PC-3 (cell line): ENCODE measurements at regions of chr5 and their contacts with region 1.

Region 1: DNA sequence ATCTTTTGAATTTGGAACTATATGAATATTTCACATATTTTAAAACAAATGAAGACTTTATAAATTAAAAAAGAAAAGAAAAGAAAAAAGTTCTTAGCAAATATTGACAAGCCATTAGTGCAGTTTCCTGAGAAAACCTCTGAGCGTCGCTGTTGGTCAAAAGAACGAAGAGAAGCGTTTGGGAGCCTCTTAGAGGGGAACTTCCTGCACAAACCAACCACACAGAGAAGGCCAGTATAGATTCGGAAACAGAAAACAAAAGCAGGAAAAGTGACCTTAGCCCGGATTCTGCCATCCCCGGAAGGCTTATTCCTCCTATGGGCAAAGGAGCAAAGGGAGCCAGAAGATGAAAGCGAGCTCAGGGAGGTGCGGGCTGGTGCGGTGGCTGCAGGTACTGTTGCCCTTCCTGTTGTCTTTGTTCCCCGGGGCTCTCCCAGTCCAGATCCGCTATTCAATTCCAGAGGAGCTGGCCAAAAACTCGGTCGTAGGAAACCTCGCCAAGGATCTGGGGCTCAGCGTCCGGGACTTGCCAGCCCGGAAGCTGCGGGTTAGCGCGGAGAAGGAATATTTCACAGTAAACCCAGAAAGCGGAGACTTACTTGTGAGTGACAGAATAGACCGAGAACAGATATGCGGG is at the start of gene PCDHGB2:
- DNase-seq: peak; percentile 63
- ATAC-seq: peak; percentile 62
- H3K4me3 ChIP-seq: peak within 1 kb of the TSS; percentile 69
- H3K27ac ChIP-seq: 0 out of 2 replicates have a peak within 1 kb of the TSS, but pooled peaks have one; percentile 23
- H3K4me1 ChIP-seq: 0 out of 2 replicates have a peak, but pooled peaks cover 3% of the 10 kb centered on the region
- H3K27me3 ChIP-seq: no peaks in the 10 kb centered on the region
- CTCF ChIP-seq: peak; percentile 67; the same call in 1 of the 2 replicates
- total RNA-seq, gene PCDHGB2: 1.4 and 2.2 TPM in 2 replicates

Region 2: GRCh38 chr5:141094481-141095262 is 265.2 kb before region 1 on chr5 and contains the start of gene PCDHB2:
- CTCF ChIA-PET with region 1: no interaction called
- POLR2A ChIA-PET with region 1: no interaction called
- intact Hi-C with region 1: loop called (anchors 5 kb)
- DNase-seq: peak; percentile 81
- ATAC-seq: peak; percentile 97
- H3K4me3 ChIP-seq: peak within 1 kb of the TSS; percentile 72
- H3K27ac ChIP-seq: no peak within 1 kb of the TSS
- H3K4me1 ChIP-seq: no peaks in the 10 kb centered on the region
- H3K27me3 ChIP-seq: no peaks in the 10 kb centered on the region
- CTCF ChIP-seq: peak; percentile 73
- total RNA-seq, gene PCDHB2: 13.8 and 15.0 TPM in 2 replicates

Region 3: GRCh38 chr5:141402553-141403260 is 42.8 kb after region 1 on chr5 and contains the start of gene PCDHGA9:
- CTCF ChIA-PET with region 1: no interaction called
- POLR2A ChIA-PET with region 1: no interaction called
- intact Hi-C with region 1: loop called (anchors 2 kb)
- DNase-seq: no peak
- ATAC-seq: no peak
- H3K4me3 ChIP-seq: no peak within 1 kb of the TSS
- H3K27ac ChIP-seq: no peak within 1 kb of the TSS
- H3K4me1 ChIP-seq: no peaks in the 10 kb centered on the region
- H3K27me3 ChIP-seq: no peaks in the 10 kb centered on the region
- CTCF ChIP-seq: no peak
- total RNA-seq, gene PCDHGA9: 1.9 and 2.9 TPM in 2 replicates

Region 4: DNA sequence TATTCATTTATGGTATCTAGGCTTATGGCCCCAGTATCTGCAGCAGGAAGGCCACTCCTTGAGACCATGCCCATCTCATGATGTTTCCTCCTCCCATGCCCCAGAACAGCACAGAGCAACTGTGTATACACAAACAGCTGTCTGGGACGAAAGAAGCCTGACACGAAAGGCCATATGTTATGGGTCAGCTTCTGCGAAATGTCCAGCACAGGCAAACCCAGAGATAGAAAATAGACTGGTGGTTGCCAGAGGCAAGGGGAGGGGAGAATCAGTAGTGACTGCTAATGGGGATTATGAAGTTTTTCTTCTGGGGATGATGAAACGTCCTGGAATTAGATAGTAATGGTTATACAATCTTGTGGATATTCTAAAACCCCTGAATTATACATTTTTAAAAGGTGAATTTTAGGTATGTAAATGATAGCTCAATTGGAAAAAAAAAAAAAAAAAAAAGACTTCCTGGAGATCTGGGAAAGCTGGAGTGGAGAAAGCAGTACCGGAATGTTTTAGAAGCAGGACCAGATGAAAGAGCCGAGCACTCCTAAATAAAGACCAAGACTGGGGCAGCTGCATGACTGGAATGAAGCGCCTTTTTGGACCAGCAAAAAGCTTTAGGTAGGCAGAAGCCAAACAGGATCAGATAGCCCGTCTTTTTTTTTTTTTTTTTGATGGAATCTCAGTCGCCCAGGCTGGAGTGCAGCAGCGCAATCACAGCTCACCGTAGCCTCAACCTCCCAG is 158.1 kb after region 1 on chr5:
- CTCF ChIA-PET with region 1: interaction called, 10 read pairs
- POLR2A ChIA-PET with region 1: no interaction called
- intact Hi-C with region 1: no loop called
- DNase-seq: no peak
- ATAC-seq: no peak
- H3K4me3 ChIP-seq: no peak overlapping the region
- H3K27ac ChIP-seq: no peak overlapping the region
- H3K4me1 ChIP-seq: peaks cover 33% of the 10 kb centered on the region
- H3K27me3 ChIP-seq: no peaks in the 10 kb centered on the region
- CTCF ChIP-seq: no peak